Mammary epithelial cell (primary cell): ENCODE measurements at regions of chr2 and their contacts with region 1.

Region 1: GRCh38 chr2:236731878-236732580 is 162.4 kb downstream of the ACKR3 start:
- DNase-seq: peak; percentile 48
- H3K4me3 ChIP-seq: no peak overlapping the region
- H3K27ac ChIP-seq: no peak overlapping the region
- H3K4me1 ChIP-seq: peaks cover 10% of the 10 kb centered on the region
- H3K27me3 ChIP-seq: no peaks in the 10 kb centered on the region
- CTCF ChIP-seq: no peak

Region 2: GRCh38 chr2:236679884-236680860 is 51.9 kb before region 1 on chr2:
- CTCF ChIA-PET with region 1: no interaction called
- dilution Hi-C with region 1: loop called (anchors 5 kb)
- in situ Hi-C with region 1: no loop called
- intact Hi-C with region 1: no loop called
- DNase-seq: peak; percentile 90
- H3K4me3 ChIP-seq: no peak overlapping the region
- H3K27ac ChIP-seq: peak overlapping the region; percentile 90
- H3K4me1 ChIP-seq: peaks cover 43% of the 10 kb centered on the region
- H3K27me3 ChIP-seq: no peaks in the 10 kb centered on the region
- CTCF ChIP-seq: no peak

Region 3: GRCh38 chr2:236919209-236919608 is 187.2 kb after region 1 on chr2:
- CTCF ChIA-PET with region 1: no interaction called
- dilution Hi-C with region 1: no loop called
- in situ Hi-C with region 1: no loop called
- intact Hi-C with region 1: no loop called
- DNase-seq: peak; percentile 7
- H3K4me3 ChIP-seq: no peak overlapping the region
- H3K27ac ChIP-seq: no peak overlapping the region
- H3K4me1 ChIP-seq: no peaks in the 10 kb centered on the region
- H3K27me3 ChIP-seq: no peaks in the 10 kb centered on the region
- CTCF ChIP-seq: no peak